Motor neuron (in vitro differentiated cells): ENCODE measurements at regions of chr3 and their contacts with region 1.

Region 1: DNA sequence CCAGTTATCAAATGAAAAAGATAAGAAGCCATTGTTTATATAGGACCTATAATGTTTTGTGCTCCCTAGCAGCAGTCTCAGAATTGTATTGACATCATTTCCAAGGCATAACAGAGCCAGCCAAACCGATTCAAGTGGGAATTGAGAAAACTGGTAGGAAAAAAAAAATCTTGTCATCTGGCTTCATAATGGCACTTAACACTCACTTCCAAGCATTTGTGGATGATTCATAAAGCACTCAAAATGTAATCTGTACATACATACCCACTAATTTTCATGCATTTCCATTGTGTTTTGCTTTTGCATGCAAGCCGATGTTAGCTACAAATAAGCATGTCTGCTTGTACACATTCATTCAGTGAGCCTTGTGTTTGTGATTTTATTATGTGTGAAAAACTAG is 18.6 kb upstream of the TRPC1 start:
- ATAC-seq: peak in 7 of 8 experiments; percentile 19 to 94 (median 57)
- H3K4me3 ChIP-seq: no peak overlapping the region
- H3K27ac ChIP-seq: no peak overlapping the region
- H3K4me1 ChIP-seq: no peaks in the 10 kb centered on the region

Region 2: GRCh38 chr3:142595951-142596725 is 109.1 kb before region 1 on chr3 and contains the start of gene PLS1:
- in situ Hi-C with region 1: loop called in 1 of 9 experiments (anchors 10 kb)
- ATAC-seq: peak; percentile 88 to 98 (median 94)
- H3K4me3 ChIP-seq: peak within 1 kb of the TSS; percentile 59 to 94 (median 78)
- H3K27ac ChIP-seq: no peak within 1 kb of the TSS
- H3K4me1 ChIP-seq: no peaks in the 10 kb centered on the region
- total RNA-seq, gene PLS1: 1.6 to 54.7 (median 2.7) TPM